ENCODE measurements at regions of chr1 and their contacts with region 1.

Region 1: DNA sequence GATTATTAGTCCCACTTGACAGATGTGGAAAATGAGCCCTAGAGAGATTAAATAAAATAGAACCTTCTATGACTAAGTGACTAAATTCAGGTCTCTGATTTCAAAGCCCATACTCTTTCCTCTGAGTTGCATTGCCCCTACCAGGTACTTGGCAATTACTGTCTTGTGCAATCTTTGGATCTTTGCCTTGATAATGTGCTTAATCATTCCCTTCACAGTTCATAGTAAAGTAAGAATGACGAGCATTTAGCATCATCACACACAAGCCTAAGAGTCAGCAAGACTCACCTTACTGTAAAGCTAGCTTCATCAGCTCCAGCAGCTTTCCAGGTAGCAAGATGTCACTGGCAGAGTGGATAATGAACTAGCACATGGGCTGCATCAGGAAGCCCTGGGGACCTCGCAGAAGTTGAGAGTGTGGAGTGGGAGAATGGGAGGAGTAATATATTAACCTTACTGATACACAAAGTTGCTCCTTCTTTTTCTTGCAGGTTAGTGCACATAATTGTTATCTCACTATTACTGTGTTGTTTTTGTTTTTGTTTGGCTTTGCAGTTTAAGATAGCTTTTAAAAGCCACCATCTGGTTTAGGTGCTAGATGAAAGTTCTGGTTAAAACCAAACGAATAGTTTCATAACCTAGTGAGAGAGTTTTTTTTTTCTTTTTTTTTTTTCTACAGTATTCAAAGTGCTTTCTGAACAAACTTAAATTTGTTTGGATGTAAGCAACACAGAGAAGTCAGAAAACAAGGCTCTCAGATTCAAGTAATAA is 71.8 kb downstream of the PBX1 start:
- DNase-seq: peak; percentile 22 to 95
- H3K4me3 ChIP-seq: peak overlapping the region; percentile 27; the same call in 1 of the 2 replicates
- H3K27ac ChIP-seq: peak overlapping the region; percentile 95
- H3K4me1 ChIP-seq: peaks cover 31% of the 10 kb centered on the region
- H3K27me3 ChIP-seq: no peaks in the 10 kb centered on the region
- CTCF ChIP-seq: no peak

Region 2: GRCh38 chr1:164667600-164667999 is 36.8 kb after region 1 on chr1:
- CTCF ChIA-PET with region 1: no interaction called
- POLR2A ChIA-PET with region 1: interaction called, 10 read pairs
- intact Hi-C with region 1: no loop called
- DNase-seq: no peak
- H3K4me3 ChIP-seq: no peak overlapping the region
- H3K27ac ChIP-seq: no peak overlapping the region
- H3K4me1 ChIP-seq: peaks cover 9% of the 10 kb centered on the region; the same call in 1 of the 2 replicates
- H3K27me3 ChIP-seq: no peaks in the 10 kb centered on the region
- CTCF ChIP-seq: no peak

Region 3: GRCh38 chr1:164836614-164837018 is 205.8 kb after region 1 on chr1:
- CTCF ChIA-PET with region 1: no interaction called
- POLR2A ChIA-PET with region 1: no interaction called
- intact Hi-C with region 1: no loop called
- DNase-seq: no peak
- H3K4me3 ChIP-seq: no peak overlapping the region
- H3K27ac ChIP-seq: no peak overlapping the region
- H3K4me1 ChIP-seq: no peaks in the 10 kb centered on the region
- H3K27me3 ChIP-seq: no peaks in the 10 kb centered on the region
- CTCF ChIP-seq: no peak